OCI-LY7 (cell line): ENCODE measurements at regions of chr11 and their contacts with region 1.

Region 1: DNA sequence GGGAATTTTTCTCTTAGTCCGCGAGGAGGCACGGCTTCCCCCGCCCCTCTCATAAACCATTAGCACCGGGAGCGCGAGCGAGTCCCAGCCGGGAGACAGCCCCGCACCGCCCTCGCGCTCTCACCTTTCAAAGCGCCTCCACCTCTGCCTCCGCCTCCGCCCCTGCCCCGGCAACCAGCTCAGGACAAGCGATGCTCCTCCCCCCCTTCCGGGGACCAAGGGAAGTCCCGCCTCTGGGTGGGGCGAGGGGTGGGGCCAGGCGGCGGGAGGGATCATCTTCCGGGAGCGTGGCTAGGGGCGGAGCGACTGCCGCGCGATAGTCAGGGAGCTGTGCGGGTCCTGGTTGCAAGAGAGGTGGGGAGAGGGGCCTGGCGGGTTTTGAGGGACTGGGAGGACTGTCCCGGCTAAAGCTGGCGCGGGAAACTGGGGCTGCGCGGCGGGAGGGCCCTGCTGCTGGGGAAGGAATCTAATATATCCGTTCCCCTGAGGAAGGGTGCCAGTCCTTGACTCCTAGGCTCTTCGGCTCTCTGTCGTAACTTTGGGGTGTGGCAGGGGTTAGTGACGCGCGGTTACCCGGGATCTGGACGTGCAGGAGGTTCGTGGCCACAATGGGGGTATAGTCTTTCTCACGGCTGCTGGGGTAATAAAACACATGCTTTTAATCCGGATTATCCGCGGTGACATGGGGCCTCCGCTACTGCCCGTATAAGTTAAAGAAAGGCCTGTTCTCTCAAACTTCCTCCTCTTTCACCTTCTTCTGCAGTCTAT is at the starts of genes CCDC82 and JRKL:
- DNase-seq: peak; percentile 95
- H3K4me3 ChIP-seq: peak within 1 kb of the TSS; percentile 82
- H3K27ac ChIP-seq: peak within 1 kb of the TSS; percentile 56
- H3K4me1 ChIP-seq: peaks cover 32% of the 10 kb centered on the region
- CTCF ChIP-seq: no peak
- total RNA-seq, gene CCDC82: 22.2 and 23.0 TPM in 2 replicates
- total RNA-seq, gene JRKL: 4.9 and 6.0 TPM in 2 replicates

Region 2: DNA sequence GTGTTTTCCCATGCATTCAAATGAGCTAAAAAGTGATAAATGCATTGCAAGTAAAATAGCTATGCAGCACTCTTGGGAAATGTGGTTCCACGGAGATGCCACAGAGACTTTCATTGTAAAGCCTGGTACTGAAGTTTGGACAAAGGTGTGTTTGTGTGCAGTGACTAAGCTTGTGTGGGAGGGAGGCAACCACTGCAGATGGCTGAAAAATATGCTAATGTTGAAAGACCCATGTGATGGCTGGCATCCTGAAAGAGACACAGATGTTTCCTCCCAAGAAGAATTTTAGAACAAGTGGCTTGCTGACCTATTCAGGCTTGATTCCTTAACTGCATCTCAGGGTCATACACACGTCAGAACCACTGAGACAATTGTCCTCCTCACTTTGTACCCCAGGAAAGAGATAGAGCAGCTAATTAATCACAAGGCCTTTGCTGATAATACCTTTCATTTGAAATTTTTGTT is 674.1 kb before region 1 on chr11:
- CTCF ChIA-PET with region 1: no interaction called
- POLR2A ChIA-PET with region 1: no interaction called
- intact Hi-C with region 1: loop called (anchors 10 kb)
- DNase-seq: peak; percentile 85
- H3K4me3 ChIP-seq: peak overlapping the region; percentile 49
- H3K27ac ChIP-seq: peak overlapping the region; percentile 78
- H3K4me1 ChIP-seq: peaks cover 59% of the 10 kb centered on the region
- CTCF ChIP-seq: no peak

Region 3: GRCh38 chr11:95849087-95849825 is 540.6 kb before region 1 on chr11:
- CTCF ChIA-PET with region 1: no interaction called
- POLR2A ChIA-PET with region 1: interaction called, 3 read pairs
- intact Hi-C with region 1: loop called (anchors 10 kb)
- DNase-seq: peak; percentile 24
- H3K4me3 ChIP-seq: no peak overlapping the region
- H3K27ac ChIP-seq: no peak overlapping the region
- H3K4me1 ChIP-seq: no peaks in the 10 kb centered on the region
- CTCF ChIP-seq: peak; percentile 69

Region 4: GRCh38 chr11:96054870-96055705 is 334.8 kb before region 1 on chr11:
- CTCF ChIA-PET with region 1: no interaction called
- POLR2A ChIA-PET with region 1: interaction called, 3 read pairs
- intact Hi-C with region 1: loop called (anchors 2 kb)
- DNase-seq: peak; percentile 54
- H3K4me3 ChIP-seq: no peak overlapping the region
- H3K27ac ChIP-seq: no peak overlapping the region
- H3K4me1 ChIP-seq: no peaks in the 10 kb centered on the region
- CTCF ChIP-seq: peak; percentile 84

Region 5: DNA sequence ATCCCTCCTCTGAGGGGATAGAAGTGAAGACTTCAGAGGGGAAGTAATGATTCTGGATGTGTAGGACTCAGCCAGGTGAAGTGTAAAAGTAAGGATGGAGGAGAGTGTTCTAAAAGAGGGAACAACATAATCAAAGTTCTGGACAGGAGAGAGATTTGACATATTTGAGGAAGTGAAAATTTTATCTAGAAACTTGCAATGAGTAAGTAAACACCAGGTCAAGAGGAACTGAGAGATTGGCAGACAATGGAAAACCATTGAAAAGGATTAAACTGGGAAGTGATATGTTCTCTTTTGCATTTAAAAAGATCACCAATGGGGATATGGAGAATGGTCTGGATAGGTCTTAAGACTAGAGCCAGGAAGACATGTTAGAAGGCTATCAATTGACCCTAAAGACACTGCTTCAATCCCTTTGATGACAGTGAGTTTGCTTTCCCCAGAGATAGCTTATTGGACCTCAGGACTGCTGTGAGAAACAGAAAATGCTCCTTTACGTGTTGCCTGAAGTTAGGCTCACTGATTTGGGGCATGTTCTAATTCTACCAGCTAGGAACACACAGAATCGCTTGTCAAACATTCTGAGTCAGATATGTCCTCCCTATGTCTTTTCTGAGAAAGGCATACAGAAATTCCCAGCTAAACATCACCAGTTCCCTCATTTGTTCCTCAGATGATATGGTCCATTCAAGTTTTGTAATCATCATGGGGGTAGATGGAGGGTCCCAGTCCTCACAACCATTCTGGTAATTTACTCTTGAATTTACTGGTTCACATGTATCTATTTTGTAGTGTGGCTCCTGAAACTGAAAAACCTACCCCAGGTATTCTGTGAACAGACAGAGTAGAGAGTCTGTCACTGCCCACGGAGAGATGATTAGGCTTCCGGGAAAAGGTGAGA is 191.9 kb before region 1 on chr11:
- CTCF ChIA-PET with region 1: no interaction called
- POLR2A ChIA-PET with region 1: no interaction called
- intact Hi-C with region 1: no loop called
- DNase-seq: peak; percentile 47
- H3K4me3 ChIP-seq: no peak overlapping the region
- H3K27ac ChIP-seq: no peak overlapping the region
- H3K4me1 ChIP-seq: peaks cover 15% of the 10 kb centered on the region
- CTCF ChIP-seq: no peak

Region 6: DNA sequence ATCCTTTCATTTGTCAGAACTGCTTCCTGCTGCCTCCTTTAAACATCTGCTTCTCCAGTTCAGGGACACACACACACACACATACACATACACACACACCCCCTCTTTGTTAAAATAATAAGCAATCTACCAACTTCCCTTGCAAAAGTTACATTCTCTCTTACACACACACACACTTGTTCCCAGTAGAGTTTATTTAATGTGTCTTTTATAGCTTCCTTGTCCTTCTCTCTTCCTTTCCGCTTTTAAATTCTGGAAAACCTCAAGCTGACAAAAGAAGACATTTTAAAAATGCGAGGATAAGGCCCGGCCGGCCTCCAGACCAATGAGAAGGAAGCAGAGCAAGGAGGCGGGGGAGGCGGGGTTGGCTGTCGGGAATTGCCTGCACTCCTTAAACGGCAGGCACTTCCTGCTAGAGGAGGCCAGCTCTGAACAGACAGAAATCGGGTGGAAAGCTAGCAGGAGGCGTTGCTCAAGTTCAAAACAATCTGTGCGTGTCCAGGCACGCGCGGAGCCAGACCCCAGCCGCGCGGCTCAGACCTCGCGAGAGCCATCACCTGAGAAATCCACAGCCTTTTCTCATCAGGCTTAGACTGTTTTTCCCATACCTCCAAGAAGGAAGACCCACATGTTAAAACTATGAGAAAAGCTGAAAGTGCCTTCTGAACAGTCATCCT is 146.8 kb before region 1 on chr11:
- CTCF ChIA-PET with region 1: no interaction called
- POLR2A ChIA-PET with region 1: interaction called, 7 read pairs
- intact Hi-C with region 1: loop called (anchors 5 kb)
- DNase-seq: no peak
- H3K4me3 ChIP-seq: no peak overlapping the region
- H3K27ac ChIP-seq: no peak overlapping the region
- H3K4me1 ChIP-seq: peaks cover 24% of the 10 kb centered on the region
- CTCF ChIP-seq: no peak

Region 7: GRCh38 chr11:96307776-96308140 is 82.1 kb before region 1 on chr11:
- CTCF ChIA-PET with region 1: no interaction called
- POLR2A ChIA-PET with region 1: no interaction called
- intact Hi-C with region 1: no loop called
- DNase-seq: no peak
- H3K4me3 ChIP-seq: no peak overlapping the region
- H3K27ac ChIP-seq: no peak overlapping the region
- H3K4me1 ChIP-seq: no peaks in the 10 kb centered on the region
- CTCF ChIP-seq: no peak

Region 8: GRCh38 chr11:96342961-96343711 is 46.8 kb before region 1 on chr11 and contains the start of gene MAML2:
- CTCF ChIA-PET with region 1: interaction called, 8 read pairs
- POLR2A ChIA-PET with region 1: interaction called, 8 read pairs
- intact Hi-C with region 1: loop called (anchors 2 kb)
- DNase-seq: peak; percentile 92
- H3K4me3 ChIP-seq: peak within 1 kb of the TSS; percentile 68
- H3K27ac ChIP-seq: no peak within 1 kb of the TSS
- H3K4me1 ChIP-seq: peaks cover 39% of the 10 kb centered on the region
- CTCF ChIP-seq: peak; percentile 74
- total RNA-seq, gene MAML2: 0.54 and 1.0 TPM in 2 replicates